ENCODE measurements at regions of chrX and their contacts with region 1.

Region 1: GRCh38 chrX:84729809-84730208 is 227.6 kb upstream of the HDX start:
- DNase-seq: peak; percentile 5
- ATAC-seq: peak; percentile 97
- H3K4me3 ChIP-seq: no peak overlapping the region
- H3K27ac ChIP-seq: no peak overlapping the region
- H3K4me1 ChIP-seq: no peaks in the 10 kb centered on the region
- H3K27me3 ChIP-seq: no peaks in the 10 kb centered on the region
- CTCF ChIP-seq: peak; percentile 70
- EP300 ChIP-seq: no peak
- POLR2A ChIP-seq: no peak
- RAD21 ChIP-seq: no peak

Region 2: DNA sequence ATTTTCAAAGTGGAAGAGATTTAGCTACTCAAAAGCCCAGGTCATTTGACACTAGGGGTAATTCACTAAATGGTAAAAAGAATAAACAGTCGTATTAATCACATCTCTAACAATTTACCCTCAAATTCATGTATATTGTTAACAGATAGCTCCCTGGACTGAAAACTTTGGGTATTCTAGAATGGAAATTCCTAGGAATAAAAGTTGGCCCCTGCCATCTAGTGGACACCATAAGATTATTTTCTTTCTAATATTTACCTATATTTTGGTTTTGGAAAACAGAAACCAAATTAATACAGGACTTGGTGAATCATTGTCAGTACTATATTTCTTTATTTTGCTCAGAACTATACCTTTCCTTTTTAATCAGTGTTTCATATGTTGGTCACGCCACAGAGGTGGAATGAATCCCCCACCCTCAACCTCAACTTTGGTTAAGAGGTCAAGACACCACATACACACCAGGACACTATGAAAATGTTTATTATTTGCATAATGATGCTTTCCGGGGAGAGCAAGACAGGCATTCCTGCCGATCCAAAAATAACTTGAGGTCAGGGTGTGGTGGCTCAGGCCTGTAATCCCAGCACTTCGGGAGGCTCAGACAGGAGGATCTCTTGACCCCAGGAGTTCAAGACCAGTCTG is 177.6 kb after region 1 on chrX:
- CTCF ChIA-PET with region 1: interaction called, 6 read pairs
- POLR2A ChIA-PET with region 1: no interaction called
- in situ Hi-C with region 1: loop called (anchors 25 kb)
- intact Hi-C with region 1: loop called (anchors 1 kb)
- DNase-seq: no peak
- ATAC-seq: no peak
- H3K4me3 ChIP-seq: no peak overlapping the region
- H3K27ac ChIP-seq: no peak overlapping the region
- H3K4me1 ChIP-seq: no peaks in the 10 kb centered on the region
- H3K27me3 ChIP-seq: no peaks in the 10 kb centered on the region
- CTCF ChIP-seq: 0 out of 2 replicates have a peak, but pooled peaks have one; percentile 0
- EP300 ChIP-seq: no peak
- POLR2A ChIP-seq: no peak
- RAD21 ChIP-seq: no peak

Region 3: GRCh38 chrX:85052636-85053343 is 323.0 kb after region 1 on chrX:
- CTCF ChIA-PET with region 1: no interaction called
- POLR2A ChIA-PET with region 1: no interaction called
- in situ Hi-C with region 1: no loop called
- intact Hi-C with region 1: loop called (anchors 2 kb)
- DNase-seq: no peak
- ATAC-seq: no peak
- H3K4me3 ChIP-seq: no peak overlapping the region
- H3K27ac ChIP-seq: no peak overlapping the region
- H3K4me1 ChIP-seq: no peaks in the 10 kb centered on the region
- H3K27me3 ChIP-seq: no peaks in the 10 kb centered on the region
- CTCF ChIP-seq: no peak
- EP300 ChIP-seq: no peak
- POLR2A ChIP-seq: no peak
- RAD21 ChIP-seq: no peak